IMR-90 (cell line): ENCODE measurements at regions of chr13 and their contacts with region 1.

Region 1: DNA sequence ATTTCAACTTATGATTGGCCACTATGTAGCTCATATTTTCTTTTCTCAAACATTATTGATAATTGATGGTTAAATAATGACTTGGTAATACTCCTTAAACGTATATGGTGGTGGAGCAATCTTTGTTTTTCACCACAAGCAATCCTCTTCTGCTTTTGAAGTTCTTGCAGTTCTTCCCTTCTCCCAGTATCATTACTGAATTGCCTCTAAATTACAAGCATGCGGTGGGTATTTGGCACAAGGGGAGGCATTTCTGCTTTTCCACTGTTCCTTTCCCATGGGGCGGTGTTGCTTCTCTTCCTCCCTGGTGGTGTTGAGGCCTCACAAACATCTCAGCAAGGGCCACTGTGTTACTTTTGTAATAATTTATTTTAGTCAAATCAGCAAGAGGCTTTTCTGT is 234.4 kb upstream of the RXFP2 start:
- DNase-seq: no peak
- ATAC-seq: no peak
- H3K4me3 ChIP-seq: no peak overlapping the region
- H3K27ac ChIP-seq: no peak overlapping the region
- H3K4me1 ChIP-seq: no peaks in the 10 kb centered on the region
- H3K27me3 ChIP-seq: no peaks in the 10 kb centered on the region
- CTCF ChIP-seq: no peak
- POLR2A ChIP-seq: no peak
- RAD21 ChIP-seq: no peak

Region 2: GRCh38 chr13:31521435-31521834 is 16.5 kb after region 1 on chr13:
- CTCF ChIA-PET with region 1: no interaction called
- POLR2A ChIA-PET with region 1: interaction called, 10 read pairs
- dilution Hi-C with region 1: no loop called
- in situ Hi-C with region 1: no loop called
- intact Hi-C with region 1: no loop called
- DNase-seq: no peak
- ATAC-seq: no peak
- H3K4me3 ChIP-seq: no peak overlapping the region
- H3K27ac ChIP-seq: no peak overlapping the region
- H3K4me1 ChIP-seq: no peaks in the 10 kb centered on the region
- H3K27me3 ChIP-seq: no peaks in the 10 kb centered on the region; the same call in 1 of the 2 replicates
- CTCF ChIP-seq: no peak
- POLR2A ChIP-seq: no peak
- RAD21 ChIP-seq: no peak

Region 3: GRCh38 chr13:31699650-31700049 is 194.7 kb after region 1 on chr13:
- CTCF ChIA-PET with region 1: no interaction called
- POLR2A ChIA-PET with region 1: no interaction called
- dilution Hi-C with region 1: no loop called
- in situ Hi-C with region 1: no loop called
- intact Hi-C with region 1: no loop called
- DNase-seq: no peak
- ATAC-seq: no peak
- H3K4me3 ChIP-seq: no peak overlapping the region
- H3K27ac ChIP-seq: no peak overlapping the region
- H3K4me1 ChIP-seq: no peaks in the 10 kb centered on the region
- H3K27me3 ChIP-seq: peaks cover 7% of the 10 kb centered on the region; the same call in 1 of the 2 replicates
- CTCF ChIP-seq: no peak
- POLR2A ChIP-seq: no peak
- RAD21 ChIP-seq: no peak